GM13976 (cell line): ENCODE measurements at regions of chr7 and their contacts with region 1.

Region 1: DNA sequence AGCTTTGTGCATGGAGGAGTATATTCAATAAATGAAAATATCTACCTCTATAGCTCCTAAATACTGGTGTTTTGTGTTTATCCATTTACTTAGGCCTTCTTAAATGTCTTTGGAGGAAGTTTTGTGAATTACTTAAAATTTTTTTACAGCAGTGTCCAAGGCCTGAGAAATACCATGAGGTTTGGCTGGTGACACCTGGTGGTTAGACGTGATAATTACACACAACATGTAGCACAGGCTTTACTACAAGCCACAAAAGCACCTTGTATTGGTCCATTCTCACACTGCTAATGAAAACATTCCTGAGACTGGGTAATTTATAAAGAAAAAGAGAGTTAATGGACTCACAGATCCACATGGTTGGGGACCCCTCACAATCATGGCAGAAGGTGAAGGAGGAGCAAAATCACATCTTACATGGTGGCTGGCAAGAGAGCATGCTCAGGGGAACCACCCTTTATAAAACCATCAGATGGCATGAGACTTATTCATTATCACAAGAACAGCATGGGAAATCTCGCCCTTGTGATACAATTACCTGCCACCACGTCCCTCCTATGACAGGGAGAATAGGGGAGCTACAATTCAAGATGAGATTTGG is 20.6 kb downstream of the HYAL4 start:
- DNase-seq: peak; percentile 20
- CTCF ChIP-seq: peak; percentile 63

Region 2: GRCh38 chr7:123682690-123683089 is 182.9 kb before region 1 on chr7:
- in situ Hi-C with region 1: loop called (anchors 25 kb)
- DNase-seq: no peak
- CTCF ChIP-seq: peak; percentile 48

Region 3: GRCh38 chr7:123805287-123805686 is 60.3 kb before region 1 on chr7:
- in situ Hi-C with region 1: loop called (anchors 10 kb)
- DNase-seq: no peak
- CTCF ChIP-seq: no peak